Activated CD4-positive, alpha-beta memory T cell treated with anti-CD3 and anti-CD28 coated beads, Interleukin-2, amount 10 ng/mL, durations not matched to agents 7 days and 5 days (primary cell): ENCODE measurements at regions of chr20 and their contacts with region 1.

Region 1: DNA sequence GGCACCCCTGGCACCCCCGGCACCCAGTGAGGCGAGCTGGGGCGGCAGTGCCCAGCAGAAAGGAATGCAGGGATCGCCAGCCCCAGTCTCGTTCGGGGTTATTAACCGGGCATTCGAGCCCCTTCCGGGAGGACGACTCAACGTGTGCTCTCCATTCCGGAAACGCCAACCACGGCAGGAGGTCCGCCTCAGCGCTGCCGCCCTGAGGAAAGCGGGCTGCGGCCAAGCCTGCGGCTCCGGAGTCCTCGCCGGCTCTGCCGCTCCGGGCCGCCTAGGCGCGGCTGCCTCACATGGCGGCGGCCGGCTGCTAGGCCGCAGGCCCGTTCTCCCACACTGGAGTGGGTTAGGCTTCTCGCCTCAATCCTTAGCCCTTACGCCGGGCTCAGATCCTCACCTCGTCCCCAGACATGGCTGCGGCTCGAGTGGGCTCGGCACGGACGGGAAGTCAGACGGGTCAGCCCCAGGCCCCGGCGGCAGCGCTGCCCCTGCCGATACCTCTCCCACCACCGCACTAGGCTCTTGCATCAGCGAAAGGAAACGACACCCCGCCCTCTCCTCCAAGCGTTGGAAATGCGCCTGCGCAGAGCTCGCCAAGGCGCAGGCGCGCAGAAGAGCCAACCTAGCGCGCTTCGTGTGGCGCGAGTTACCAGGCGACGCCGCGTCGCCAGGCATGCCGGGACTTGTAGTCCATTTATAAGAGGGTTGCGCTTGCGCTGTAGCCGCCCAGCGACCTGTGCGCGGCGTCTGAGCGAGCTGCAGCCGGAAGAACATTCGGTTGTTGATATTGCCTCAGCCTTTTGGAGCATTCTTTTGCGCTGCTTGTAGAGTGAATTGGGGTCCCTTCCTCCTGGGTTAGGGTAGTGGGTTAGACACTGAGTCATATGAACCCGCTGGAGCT is at the start of gene EIF2S2:
- DNase-seq: peak; percentile 97
- H3K4me3 Mint-ChIP-seq: peak within 1 kb of the TSS; percentile 86
- H3K27ac Mint-ChIP-seq: peak within 1 kb of the TSS; percentile 92
- H3K4me1 Mint-ChIP-seq: peaks cover 39% of the 10 kb centered on the region
- H3K27me3 Mint-ChIP-seq: peaks cover 2% of the 10 kb centered on the region
- total RNA-seq, gene EIF2S2: 106 to 108 TPM

Region 2: DNA sequence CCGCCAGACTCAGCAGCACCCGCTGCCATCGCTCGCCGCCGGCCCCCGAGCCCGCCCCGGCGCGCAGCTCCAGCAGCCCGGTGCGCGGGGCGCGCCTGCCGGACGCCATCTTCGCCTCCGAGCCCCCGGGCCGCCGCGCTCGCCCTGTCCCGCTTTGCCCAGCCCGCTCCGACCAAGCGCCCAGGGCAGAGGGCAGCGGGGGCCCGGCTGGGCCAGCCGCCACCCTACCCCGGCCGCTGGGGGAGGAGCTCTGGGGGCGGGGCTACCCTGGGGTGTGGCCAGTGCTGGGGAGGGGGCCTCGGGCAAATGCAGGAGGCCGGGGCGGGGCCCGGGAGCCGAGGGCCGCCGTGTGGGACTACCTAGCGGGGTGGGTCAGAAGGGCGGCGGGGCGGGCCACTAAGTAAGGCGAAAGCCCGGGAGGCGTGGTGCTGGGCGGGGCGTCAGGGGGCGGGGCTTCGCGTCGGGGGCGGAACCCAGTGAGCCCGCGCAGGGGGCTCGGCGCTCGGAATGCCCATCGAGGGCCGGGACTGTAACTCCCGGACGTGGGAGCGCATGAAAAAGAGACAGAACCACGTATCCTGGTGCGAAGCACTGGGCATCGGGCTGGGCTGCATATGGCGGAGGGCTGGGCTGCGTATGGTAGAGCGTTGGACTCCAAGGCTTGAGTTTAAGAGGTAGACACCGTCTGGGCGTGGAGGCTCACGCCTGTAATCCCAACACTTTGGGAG is 668.3 kb before region 1 on chr20 and contains the start of gene SNTA1:
- CTCF ChIA-PET with region 1: no interaction called
- POLR2A ChIA-PET with region 1: interaction called, 11 read pairs
- DNase-seq: peak; percentile 92
- H3K4me3 Mint-ChIP-seq: peak within 1 kb of the TSS; percentile 87
- H3K27ac Mint-ChIP-seq: peak within 1 kb of the TSS; percentile 89
- H3K4me1 Mint-ChIP-seq: peaks cover 23% of the 10 kb centered on the region
- H3K27me3 Mint-ChIP-seq: peaks cover 12% of the 10 kb centered on the region
- total RNA-seq, gene SNTA1: 5.6 to 6.9 TPM

Region 3: DNA sequence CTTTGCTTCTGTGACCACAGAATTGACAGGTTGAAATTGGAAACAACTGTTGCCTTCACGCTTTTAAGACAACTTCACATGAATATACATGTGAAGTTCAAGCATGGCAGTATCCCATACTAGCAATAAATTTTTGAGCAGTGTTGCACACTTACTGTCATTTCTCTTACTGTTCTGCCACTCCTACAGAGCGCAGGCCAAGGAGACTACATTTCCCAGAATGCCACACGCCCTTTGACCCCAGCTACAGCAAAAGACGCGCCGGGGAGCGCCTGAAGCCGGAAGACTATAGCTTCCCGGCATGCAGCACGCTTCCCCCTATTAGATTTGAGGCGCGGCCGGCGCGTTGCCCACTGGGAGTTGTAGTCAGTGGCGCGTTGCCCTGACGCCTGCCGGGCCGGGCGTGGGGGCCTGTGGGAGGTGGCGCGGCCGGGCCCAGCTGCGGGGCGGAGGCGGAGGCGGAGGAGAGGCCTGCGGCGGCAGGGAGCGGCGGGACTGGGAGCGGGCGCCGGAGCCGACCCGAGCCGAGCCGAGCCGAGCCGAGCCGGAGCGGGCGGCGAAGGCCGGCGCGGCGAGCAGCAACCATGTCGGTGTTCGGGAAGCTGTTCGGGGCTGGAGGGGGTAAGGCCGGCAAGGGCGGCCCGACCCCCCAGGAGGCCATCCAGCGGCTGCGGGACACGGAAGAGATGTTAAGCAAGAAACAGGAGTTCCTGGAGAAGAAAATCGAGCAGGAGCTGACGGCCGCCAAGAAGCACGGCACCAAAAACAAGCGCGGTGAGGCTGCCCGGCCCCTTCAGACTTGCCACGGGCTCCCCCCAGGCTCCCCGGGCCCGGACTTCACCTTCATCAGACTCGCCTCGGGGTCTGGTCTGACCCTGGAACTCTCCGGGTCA is 300.8 kb before region 1 on chr20 and contains the start of gene CHMP4B:
- CTCF ChIA-PET with region 1: no interaction called
- POLR2A ChIA-PET with region 1: interaction called, 21 read pairs
- DNase-seq: peak; percentile 99
- H3K4me3 Mint-ChIP-seq: peak within 1 kb of the TSS; percentile 96
- H3K27ac Mint-ChIP-seq: peak within 1 kb of the TSS; percentile 88
- H3K4me1 Mint-ChIP-seq: peaks cover 33% of the 10 kb centered on the region
- H3K27me3 Mint-ChIP-seq: no peaks in the 10 kb centered on the region
- total RNA-seq, gene CHMP4B: 86.7 to 86.9 TPM

Region 4: GRCh38 chr20:33992923-33993575 is 118.9 kb before region 1 on chr20:
- CTCF ChIA-PET with region 1: interaction called, 6 read pairs
- POLR2A ChIA-PET with region 1: interaction called, 73 read pairs
- DNase-seq: peak; percentile 100
- H3K4me3 Mint-ChIP-seq: peak overlapping the region; percentile 97
- H3K27ac Mint-ChIP-seq: peak overlapping the region; percentile 98
- H3K4me1 Mint-ChIP-seq: peaks cover 51% of the 10 kb centered on the region
- H3K27me3 Mint-ChIP-seq: no peaks in the 10 kb centered on the region

Region 5: DNA sequence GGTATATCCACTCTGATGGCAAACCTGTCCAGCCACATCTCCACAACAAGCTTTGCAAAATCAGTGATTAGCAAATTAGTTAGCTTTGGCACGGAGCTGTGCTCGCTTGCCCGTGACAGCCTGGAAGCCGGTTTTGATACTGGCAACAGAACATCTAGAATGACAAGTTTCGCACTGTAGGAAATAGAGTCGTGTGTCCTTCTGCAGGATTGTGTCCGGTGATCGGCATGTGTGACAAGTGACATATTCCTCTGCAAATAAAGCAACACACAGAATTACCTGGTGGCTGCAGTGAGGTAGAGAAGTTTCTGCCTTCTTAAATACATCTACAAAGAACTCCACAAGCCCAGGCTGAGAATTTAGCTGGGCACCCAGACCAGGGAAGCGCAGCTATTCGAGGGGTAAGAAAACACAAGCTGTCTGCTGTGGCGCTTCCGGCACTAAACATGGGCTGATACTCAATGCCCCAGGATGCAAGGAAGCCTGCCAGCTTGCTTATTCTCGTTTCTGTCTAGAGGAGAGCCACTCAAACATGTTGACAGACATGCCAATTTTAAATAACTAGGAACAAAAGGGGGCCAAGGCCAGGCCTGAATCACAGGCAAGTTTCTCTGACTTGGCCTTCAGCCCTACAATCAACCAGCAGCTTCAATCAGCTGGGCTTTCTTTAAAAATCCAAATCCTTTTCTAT is 22.2 kb before region 1 on chr20:
- CTCF ChIA-PET with region 1: interaction called, 4 read pairs
- POLR2A ChIA-PET with region 1: interaction called, 20 read pairs
- DNase-seq: no peak
- H3K4me3 Mint-ChIP-seq: no peak overlapping the region
- H3K27ac Mint-ChIP-seq: no peak overlapping the region
- H3K4me1 Mint-ChIP-seq: peaks cover 18% of the 10 kb centered on the region
- H3K27me3 Mint-ChIP-seq: no peaks in the 10 kb centered on the region

Region 6: DNA sequence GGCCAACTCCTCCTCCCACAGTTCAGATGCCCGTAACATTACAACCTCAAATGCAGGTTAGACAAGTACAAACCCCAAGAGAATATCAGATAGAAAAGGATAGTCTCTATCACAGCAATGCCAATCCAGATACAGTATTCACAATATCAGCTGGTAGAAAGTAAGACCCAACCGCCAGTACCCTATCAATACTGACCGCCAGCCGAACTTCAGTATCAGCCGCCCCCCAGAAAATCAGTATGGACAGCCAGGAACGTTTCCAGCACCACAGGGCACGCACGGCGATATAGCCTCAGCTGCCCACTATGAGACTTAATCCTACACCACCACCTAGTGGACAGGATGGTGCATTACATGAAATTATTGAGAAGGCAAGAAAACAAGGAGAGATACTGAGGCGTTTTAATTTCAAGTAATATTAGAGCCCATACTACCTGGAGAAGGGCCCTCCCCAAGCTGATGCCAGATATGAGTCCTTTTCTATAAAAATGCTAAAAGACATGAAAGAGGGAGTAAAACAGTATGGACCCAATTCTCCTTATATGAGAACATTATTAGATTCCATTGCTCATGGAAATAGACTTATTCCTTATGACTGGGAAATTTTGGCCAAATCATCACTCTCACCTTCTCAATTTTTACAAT is 17.7 kb after region 1 on chr20:
- CTCF ChIA-PET with region 1: interaction called, 14 read pairs
- POLR2A ChIA-PET with region 1: interaction called, 14 read pairs
- DNase-seq: peak; percentile 57
- H3K4me3 Mint-ChIP-seq: no peak overlapping the region
- H3K27ac Mint-ChIP-seq: no peak overlapping the region
- H3K4me1 Mint-ChIP-seq: peaks cover 8% of the 10 kb centered on the region
- H3K27me3 Mint-ChIP-seq: peaks cover 26% of the 10 kb centered on the region